ENCODE measurements at regions of chr7 and their contacts with region 1.

Region 1: DNA sequence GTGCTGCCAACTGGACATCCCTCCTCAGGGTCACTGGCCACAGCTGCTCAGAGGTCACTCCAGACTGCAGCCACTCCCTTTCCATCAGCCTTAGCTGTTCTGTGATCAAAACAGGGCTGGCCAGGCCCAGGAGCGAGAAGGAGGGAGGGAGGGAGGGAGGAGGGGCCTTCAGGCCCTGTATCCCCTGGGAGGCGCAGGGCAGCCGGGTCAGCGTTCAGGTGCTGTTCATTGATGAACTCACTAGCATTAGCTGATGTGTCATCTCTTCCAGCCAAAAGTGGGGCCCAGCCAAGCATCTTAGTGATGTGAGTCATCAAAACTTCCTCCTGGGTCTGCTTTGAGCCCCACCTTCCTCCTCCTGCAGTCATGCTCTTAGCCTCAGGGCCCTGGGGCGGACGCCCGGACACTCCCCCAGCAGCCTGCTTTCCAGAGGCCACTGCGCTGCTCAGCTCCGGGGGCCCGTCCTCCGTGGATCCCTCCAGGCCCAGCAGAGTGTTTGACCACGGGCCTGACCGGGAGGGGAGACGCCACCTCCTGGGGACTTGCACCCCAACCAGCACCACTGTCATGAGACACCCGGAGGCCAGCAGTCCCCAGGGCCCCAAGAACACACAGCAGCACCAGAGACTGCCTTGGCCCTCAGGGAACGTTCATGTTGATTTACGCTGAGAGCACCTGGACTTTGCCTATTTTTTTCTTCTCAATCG is 149.2 kb downstream of the PRKAG2 start:
- DNase-seq: peak; percentile 66
- H3K4me3 ChIP-seq: no peak overlapping the region
- H3K27ac ChIP-seq: peak overlapping the region; percentile 33 to 65 (median 38)
- H3K4me1 ChIP-seq: peaks cover 10 to 12% (median 11%) of the 10 kb centered on the region in 4 donors
- H3K27me3 ChIP-seq: no peaks in the 10 kb centered on the region
- CTCF ChIP-seq: no peak
- EP300 ChIP-seq: no peak
- POLR2A ChIP-seq: no peak

Region 2: DNA sequence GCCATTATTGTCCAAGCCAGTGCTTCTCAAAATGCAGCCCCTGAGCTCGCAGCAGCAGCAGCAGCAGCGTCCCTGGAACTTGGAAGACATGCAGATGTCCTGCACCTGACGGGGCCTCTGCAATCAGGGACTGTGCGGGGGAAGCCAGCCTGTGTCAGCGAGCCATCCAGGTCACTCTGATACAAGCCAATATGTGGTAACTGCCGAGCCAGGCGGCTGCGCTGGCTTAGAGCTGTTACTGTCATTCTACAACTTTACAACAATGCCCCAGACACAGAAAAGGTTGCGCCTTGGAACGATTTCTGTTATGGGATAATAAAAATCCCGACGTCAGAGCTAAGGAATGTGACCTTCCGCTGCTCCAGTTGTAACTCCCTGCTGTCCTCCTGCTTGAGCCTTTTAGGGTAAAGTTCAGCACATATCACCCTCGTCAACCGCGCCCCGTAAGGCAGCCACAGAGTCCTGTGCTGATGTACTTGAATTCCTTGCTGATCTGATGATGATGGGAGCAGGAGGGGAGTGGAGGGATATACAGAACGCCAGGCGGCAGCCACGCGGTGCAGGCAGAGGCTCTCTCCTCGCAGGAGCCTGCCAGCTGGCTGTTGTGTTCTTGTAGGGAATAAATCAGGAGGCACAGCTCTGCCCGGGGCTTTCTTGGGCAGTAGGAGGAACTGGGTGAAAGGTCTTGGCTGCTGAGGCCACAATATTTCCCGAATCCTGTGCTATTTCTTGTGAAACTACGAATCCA is 267.8 kb before region 1 on chr7:
- in situ Hi-C with region 1: loop called in 1 of 4 experiments (anchors 25 kb)
- intact Hi-C with region 1: no loop called
- DNase-seq: peak; percentile 87
- H3K4me3 ChIP-seq: peak overlapping the region in 2 of 4 donors; percentile 11 to 16
- H3K27ac ChIP-seq: peak overlapping the region; percentile 86 to 92 (median 88)
- H3K4me1 ChIP-seq: peaks cover 22 to 27% (median 24%) of the 10 kb centered on the region in 4 donors
- H3K27me3 ChIP-seq: no peaks in the 10 kb centered on the region
- CTCF ChIP-seq: peak in 3 of 5 experiments; percentile 11 to 26 (median 15)
- EP300 ChIP-seq: peak; percentile 94
- POLR2A ChIP-seq: peak; percentile 66

Region 3: DNA sequence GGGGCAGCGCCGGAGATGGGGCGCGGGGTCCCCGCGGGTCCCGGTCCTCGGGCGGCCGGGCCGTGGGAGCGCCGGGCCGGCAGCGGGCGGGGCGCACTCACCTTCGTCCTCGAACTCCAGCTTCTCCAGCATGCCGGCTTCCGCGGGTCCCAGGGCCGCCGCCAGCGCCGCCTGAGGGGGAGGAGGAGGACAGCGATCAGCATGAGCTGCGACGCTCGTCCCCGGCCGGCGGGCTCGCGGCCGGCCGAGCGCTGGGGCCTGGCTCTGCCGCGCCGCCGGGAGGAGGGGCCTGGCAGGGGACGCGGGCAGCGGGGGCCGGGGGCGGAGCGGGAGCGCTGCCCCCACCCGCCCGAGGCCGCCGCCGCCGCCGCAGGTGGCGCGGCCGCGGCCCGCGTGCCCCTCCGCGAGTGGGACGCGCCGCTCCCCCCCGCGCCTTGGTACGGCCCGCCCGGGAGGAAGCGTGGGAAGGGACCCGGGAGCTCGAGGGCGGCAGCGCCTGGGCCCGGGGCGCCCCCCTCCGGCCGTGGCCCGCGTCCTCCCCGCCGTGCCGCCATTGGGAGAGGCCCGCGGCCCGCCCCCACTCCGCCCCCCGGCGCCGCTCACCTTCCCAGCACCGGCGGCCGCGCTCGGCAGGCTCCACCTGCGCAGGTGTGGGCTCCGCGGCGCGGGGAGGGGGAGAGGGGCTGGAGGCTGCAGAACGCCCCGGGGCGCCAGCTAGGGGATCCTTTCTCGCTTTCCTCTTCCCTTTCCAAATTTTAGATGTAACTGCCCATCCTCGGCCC is 95.6 kb before region 1 on chr7:
- in situ Hi-C with region 1: loop called in 1 of 4 experiments (anchors 25 kb)
- intact Hi-C with region 1: no loop called
- DNase-seq: peak; percentile 92
- H3K4me3 ChIP-seq: peak overlapping the region; percentile 39 to 92 (median 76)
- H3K27ac ChIP-seq: peak overlapping the region; percentile 91 to 95 (median 94)
- H3K4me1 ChIP-seq: peaks cover 3 to 31% (median 9%) of the 10 kb centered on the region in 4 donors
- H3K27me3 ChIP-seq: no peaks in the 10 kb centered on the region
- CTCF ChIP-seq: peak in 2 of 5 experiments; percentile 13 to 29
- EP300 ChIP-seq: no peak
- POLR2A ChIP-seq: no peak

Region 4: DNA sequence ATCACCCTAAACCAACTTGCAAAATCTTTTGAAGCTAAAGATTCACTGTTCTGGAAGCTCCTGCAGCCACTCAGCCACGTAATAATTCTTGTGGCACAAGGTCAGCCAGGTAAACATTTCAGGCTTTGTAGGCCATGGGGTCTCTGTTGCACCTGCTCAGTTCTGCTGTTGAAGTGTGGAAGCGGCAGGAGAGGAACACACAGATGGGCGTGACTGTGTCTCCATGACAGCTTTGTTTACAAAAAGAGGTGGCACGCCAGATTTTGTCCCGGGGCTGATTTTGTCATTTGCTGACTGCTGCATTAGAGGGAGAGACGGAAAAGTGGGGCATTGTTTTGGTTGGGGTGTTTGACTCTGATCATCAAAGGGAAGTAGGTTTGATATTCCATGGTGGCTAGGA is 46.0 kb after region 1 on chr7:
- in situ Hi-C with region 1: no loop called
- intact Hi-C with region 1: no loop called
- DNase-seq: no peak
- H3K4me3 ChIP-seq: no peak overlapping the region
- H3K27ac ChIP-seq: no peak overlapping the region
- H3K4me1 ChIP-seq: no peaks in the 10 kb centered on the region
- H3K27me3 ChIP-seq: no peaks in the 10 kb centered on the region
- CTCF ChIP-seq: no peak
- EP300 ChIP-seq: no peak
- POLR2A ChIP-seq: no peak